Endothelial cell of umbilical vein (primary cell): ENCODE measurements at regions of chr12 and their contacts with region 1.

Region 1: GRCh38 chr12:105107494-105108371 is at the start of gene WASHC4:
- DNase-seq: peak; percentile 94
- H3K4me3 ChIP-seq: peak within 1 kb of the TSS; percentile 94 to 99 (median 96)
- H3K27ac ChIP-seq: peak within 1 kb of the TSS; percentile 68
- H3K4me1 ChIP-seq: peaks cover 24% of the 10 kb centered on the region
- H3K27me3 ChIP-seq: no peaks in the 10 kb centered on the region
- CTCF ChIP-seq: peak in 1 of 2 donors; percentile 7
- POLR2A ChIP-seq: peak; percentile 99
- total RNA-seq, gene WASHC4: 99.8 and 123 TPM in 2 replicates

Region 2: GRCh38 chr12:104303538-104304151 is 804.1 kb before region 1 on chr12 and contains the start of gene EID3:
- CTCF ChIA-PET with region 1: no interaction called
- POLR2A ChIA-PET with region 1: interaction called, 3 read pairs
- dilution Hi-C with region 1: no loop called
- intact Hi-C with region 1: loop called (anchors 5 kb)
- DNase-seq: peak; percentile 86
- H3K4me3 ChIP-seq: peak within 1 kb of the TSS; percentile 11 to 37 (median 36)
- H3K27ac ChIP-seq: peak within 1 kb of the TSS; percentile 46
- H3K4me1 ChIP-seq: peaks cover 67% of the 10 kb centered on the region
- H3K27me3 ChIP-seq: no peaks in the 10 kb centered on the region
- CTCF ChIP-seq: no peak
- POLR2A ChIP-seq: peak; percentile 46
- total RNA-seq, gene EID3: 12.7 and 14.5 TPM in 2 replicates

Region 3: DNA sequence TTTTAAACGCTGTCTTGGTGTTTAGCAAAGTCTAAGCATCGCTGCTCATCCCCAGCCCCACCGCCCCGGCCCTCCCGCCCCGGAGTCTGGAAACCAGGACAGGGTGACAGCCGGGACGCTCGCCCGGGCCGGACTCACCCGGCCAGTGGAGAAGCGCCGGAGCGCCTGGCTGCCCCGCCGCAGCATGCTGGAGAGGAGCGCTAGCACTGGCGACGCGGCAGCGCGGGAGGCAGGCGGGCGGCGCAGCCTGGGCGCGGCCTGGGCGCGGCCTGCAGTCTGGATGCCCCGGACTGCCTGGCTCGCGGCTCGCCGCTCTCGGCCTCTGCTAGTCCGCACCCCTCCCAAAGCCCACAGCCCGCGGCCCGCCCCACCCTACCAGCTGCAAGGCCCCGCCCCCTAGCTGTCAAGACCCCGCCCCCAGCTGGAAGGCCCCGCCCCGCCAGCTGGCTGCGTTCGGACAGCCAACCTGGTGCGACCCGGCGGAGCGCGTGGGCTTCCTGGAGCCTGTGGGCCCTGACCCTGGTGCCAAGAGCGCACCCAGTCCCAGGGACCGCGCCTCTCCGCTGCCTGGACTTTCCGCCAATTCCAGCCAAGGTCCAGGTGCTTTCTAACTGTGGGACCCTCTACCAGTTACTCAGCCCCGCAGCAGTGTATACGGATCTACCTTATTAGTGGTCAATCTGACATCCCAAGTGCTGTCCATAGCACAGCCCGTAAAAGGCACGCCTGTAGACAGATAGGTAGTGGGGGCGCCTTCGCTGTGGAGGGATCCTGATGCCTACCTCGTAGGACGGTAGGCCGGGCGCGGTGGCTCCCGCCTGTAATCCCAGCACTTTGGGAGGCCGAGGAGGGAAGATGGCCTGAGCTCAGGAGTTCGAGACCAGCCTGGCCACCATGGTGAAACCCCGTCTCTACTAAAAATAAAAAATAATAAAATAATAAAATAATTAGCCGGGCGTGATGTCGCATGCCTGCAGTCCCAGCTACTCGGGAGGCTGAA is 23.2 kb before region 1 on chr12 and contains the start of gene ALDH1L2:
- CTCF ChIA-PET with region 1: interaction called, 8 read pairs
- POLR2A ChIA-PET with region 1: no interaction called
- dilution Hi-C with region 1: no loop called
- intact Hi-C with region 1: loop called (anchors 2 kb)
- DNase-seq: peak; percentile 77
- H3K4me3 ChIP-seq: peak within 1 kb of the TSS; percentile 2 to 37 (median 21)
- H3K27ac ChIP-seq: no peak within 1 kb of the TSS
- H3K4me1 ChIP-seq: peaks cover 6% of the 10 kb centered on the region
- H3K27me3 ChIP-seq: peaks cover 0 to under 1% of the 10 kb centered on the region in 2 experiments
- CTCF ChIP-seq: no peak
- POLR2A ChIP-seq: no peak
- total RNA-seq, gene ALDH1L2: 2.2 and 2.5 TPM in 2 replicates